Right cardiac atrium (tissue), 5 donors: ENCODE measurements at regions of chr1 and their contacts with region 1.

Region 1: GRCh38 chr1:178282949-178283367 is 189.1 kb downstream of the RASAL2 start:
- DNase-seq: no peak
- ATAC-seq: peak; percentile 18 to 31
- H3K4me3 ChIP-seq: no peak overlapping the region
- H3K27ac ChIP-seq: no peak overlapping the region
- H3K4me1 ChIP-seq: no peaks in the 10 kb centered on the region
- H3K27me3 ChIP-seq: no peaks in the 10 kb centered on the region

Region 2: DNA sequence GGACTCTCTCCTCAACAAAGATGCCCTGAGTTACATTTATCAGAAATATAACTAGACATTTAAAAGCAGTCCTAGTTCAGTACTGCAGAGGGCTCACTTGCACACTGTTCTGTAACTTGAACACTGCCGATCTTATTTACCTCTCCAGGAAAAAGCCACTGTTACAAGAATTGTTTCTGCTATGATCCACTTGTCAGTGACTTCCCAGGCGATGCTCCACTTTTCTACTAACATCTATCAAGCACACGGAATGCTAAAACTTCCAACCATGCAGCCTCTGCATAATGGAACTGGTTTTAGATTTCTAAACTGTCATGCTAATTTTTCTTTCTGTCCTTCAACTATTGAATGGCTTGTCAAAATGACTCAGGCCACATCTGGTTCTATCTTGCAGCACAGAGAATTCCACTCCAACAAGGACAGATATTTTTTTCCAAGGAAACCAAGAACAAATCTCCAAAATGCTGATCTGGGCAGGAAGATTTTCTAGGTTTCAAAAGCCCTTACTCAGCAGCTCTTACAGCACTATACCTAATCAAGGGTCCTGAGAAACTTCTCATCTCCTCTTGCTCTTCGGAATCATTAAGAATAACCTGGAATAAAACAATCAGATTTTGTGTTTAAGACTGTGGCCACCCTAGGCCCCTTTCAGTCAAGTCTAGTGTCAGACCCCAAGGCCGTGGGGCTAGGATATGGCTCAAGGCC is 323.0 kb before region 1 on chr1:
- intact Hi-C with region 1: loop called in 1 of 4 experiments (anchors 10 kb)
- DNase-seq: no peak
- ATAC-seq: peak; percentile 45 to 48
- H3K4me3 ChIP-seq: no peak overlapping the region
- H3K27ac ChIP-seq: no peak overlapping the region
- H3K4me1 ChIP-seq: no peaks in the 10 kb centered on the region
- H3K27me3 ChIP-seq: no peaks in the 10 kb centered on the region

Region 3: GRCh38 chr1:178031856-178032320 is 251.1 kb before region 1 on chr1:
- intact Hi-C with region 1: loop called in 2 of 4 experiments (anchors 5 to 10 kb)
- DNase-seq: peak; percentile 91 to 95 (median 92)
- ATAC-seq: peak; percentile 88 to 90
- H3K4me3 ChIP-seq: no peak overlapping the region
- H3K27ac ChIP-seq: no peak overlapping the region
- H3K4me1 ChIP-seq: no peaks in the 10 kb centered on the region
- H3K27me3 ChIP-seq: no peaks in the 10 kb centered on the region